ENCODE measurements at regions of chr1 and their contacts with region 1.

Region 1: DNA sequence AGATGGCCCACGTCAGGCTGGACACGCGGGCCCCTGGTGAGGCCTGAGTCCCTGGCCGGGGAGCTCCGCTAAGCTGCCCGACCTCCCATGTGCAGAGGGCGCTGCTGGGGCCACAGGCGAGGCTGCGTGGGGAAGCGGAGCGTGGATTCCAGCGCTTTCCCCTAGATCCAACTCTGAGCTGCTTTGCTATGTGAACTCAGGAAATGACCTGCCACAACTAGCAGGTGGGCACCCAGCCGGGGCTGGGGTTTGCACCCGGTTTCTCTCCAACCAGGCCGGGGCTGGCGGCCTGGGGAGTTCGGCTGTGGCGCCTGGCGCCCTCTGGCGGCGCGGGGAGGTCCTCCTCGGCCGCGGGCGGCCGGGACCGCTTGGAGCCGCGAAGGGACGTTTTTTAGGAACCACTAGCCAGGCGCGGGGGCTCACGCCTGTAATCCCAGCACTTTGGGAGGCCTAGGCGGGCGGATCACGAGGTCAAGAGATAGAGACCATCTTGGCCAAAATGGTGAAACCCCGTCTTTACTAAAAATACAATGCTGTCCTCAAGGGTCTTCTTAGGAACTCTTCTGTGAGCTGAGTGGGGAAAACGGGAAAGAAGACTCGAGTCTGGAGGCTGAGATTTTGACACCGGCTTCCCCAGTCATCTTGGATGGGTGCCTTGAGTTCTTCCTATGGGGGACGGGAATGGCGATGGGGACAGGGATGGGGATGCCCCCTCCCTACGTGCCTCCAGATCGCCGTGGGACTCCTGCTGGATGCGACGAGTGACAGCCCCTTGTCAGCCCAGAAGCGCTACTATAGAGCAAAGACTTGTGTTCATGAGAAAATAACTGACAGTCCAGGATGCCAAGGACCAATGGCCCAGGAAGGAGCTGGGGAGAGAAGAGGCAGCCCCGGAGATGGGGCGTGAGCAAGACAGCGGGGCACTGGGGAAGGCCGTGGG is 12.6 kb downstream of the PYCR2 start:
- DNase-seq: peak; percentile 84
- ATAC-seq: peak; percentile 96

Region 2: DNA sequence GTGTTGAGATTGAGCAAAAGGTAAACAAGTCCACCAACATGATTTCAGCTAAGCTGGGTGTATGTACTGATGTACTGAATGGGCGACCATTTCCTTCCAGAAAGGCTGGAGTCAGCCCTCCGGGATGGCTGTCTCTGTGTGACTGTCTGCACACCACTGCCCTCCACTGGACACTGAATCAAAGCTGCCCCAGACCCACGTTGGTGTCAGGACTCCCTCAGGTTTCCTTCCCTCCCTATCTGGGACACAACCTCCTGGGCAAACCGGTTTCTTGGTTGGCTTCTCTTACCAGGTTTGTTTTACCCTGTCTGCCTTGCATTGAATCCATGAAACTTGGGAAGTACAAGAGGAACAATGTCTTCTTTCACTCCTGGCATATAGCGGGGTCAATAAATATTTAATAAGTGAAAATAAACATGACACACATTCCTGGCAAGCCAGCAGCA is 139.1 kb before region 1 on chr1:
- intact Hi-C with region 1: loop called (anchors 5 kb)
- DNase-seq: peak; percentile 84
- ATAC-seq: peak; percentile 89